Prostate gland (tissue), 2 donors: ENCODE measurements at regions of chr17 and their contacts with region 1.

Region 1: DNA sequence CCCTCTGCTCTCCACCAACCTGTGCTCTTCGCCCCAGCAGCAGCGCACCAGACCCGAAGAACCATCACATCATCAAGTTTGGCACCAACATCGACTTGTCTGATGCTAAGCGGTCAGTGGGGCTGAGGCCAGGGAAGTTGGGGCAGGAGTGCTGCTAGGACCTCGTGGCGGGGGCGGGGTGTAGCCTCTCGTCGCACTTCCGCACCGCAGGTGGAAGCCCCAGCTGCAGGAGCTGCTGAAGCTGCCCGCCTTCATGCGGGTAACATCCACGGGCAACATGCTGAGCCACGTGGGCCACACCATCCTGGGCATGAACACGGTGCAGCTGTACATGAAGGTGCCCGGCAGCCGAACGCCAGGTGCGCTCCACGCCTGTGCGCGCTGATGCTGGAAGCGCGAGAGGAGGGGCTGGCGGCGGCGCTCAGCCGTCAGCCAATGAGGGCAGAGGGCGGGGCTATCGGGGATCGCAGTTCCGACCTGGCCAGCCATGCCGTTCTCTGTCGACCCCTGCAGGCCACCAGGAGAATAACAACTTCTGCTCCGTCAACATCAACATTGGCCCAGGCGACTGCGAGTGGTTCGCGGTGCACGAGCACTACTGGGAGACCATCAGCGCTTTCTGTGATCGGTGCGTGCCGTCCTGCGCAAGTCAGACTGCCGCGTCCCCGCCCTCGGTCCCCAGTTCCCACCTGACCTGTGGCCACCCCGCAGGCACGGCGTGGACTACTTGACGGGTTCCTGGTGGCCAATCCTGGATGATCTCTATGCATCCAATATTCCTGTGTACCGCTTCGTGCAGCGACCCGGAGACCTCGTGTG is 3.2 kb upstream of the TMEM88 start:
- DNase-seq: peak; percentile 90
- H3K4me3 ChIP-seq: no peak overlapping the region
- H3K27ac ChIP-seq: peak overlapping the region; percentile 27 to 43
- H3K4me1 ChIP-seq: peaks cover 5% of the 10 kb centered on the region
- H3K27me3 ChIP-seq: no peaks in the 10 kb centered on the region
- CTCF ChIP-seq: peak; percentile 95 to 100 (median 99)
- POLR2A ChIP-seq: no peak

Region 2: GRCh38 chr17:7454980-7455379 is 396.7 kb before region 1 on chr17:
- intact Hi-C with region 1: no loop called
- DNase-seq: no peak
- H3K4me3 ChIP-seq: no peak overlapping the region
- H3K27ac ChIP-seq: no peak overlapping the region
- H3K4me1 ChIP-seq: no peaks in the 10 kb centered on the region
- H3K27me3 ChIP-seq: no peaks in the 10 kb centered on the region
- CTCF ChIP-seq: no peak
- POLR2A ChIP-seq: no peak

Region 3: GRCh38 chr17:7823581-7824397 is 27.9 kb before region 1 on chr17:
- intact Hi-C with region 1: loop called (anchors 2 kb)
- DNase-seq: no peak
- H3K4me3 ChIP-seq: no peak overlapping the region
- H3K27ac ChIP-seq: no peak overlapping the region
- H3K4me1 ChIP-seq: no peaks in the 10 kb centered on the region
- H3K27me3 ChIP-seq: no peaks in the 10 kb centered on the region
- CTCF ChIP-seq: no peak
- POLR2A ChIP-seq: no peak

Region 4: GRCh38 chr17:8105957-8106398 is 254.3 kb after region 1 on chr17:
- intact Hi-C with region 1: no loop called
- DNase-seq: no peak
- H3K4me3 ChIP-seq: no peak overlapping the region
- H3K27ac ChIP-seq: no peak overlapping the region
- H3K4me1 ChIP-seq: no peaks in the 10 kb centered on the region
- H3K27me3 ChIP-seq: no peaks in the 10 kb centered on the region
- CTCF ChIP-seq: no peak
- POLR2A ChIP-seq: no peak